Endothelial cell of umbilical vein (primary cell): ENCODE measurements at regions of chr2 and their contacts with region 1.

Region 1: GRCh38 chr2:64675860-64676259 is 22.1 kb upstream of the SERTAD2 start:
- DNase-seq: no peak
- H3K4me3 ChIP-seq: no peak overlapping the region
- H3K27ac ChIP-seq: no peak overlapping the region
- H3K4me1 ChIP-seq: no peaks in the 10 kb centered on the region
- H3K27me3 ChIP-seq: no peaks in the 10 kb centered on the region
- CTCF ChIP-seq: no peak
- POLR2A ChIP-seq: no peak

Region 2: GRCh38 chr2:64661741-64662169 is 14.1 kb before region 1 on chr2:
- CTCF ChIA-PET with region 1: interaction called, 10 read pairs
- POLR2A ChIA-PET with region 1: no interaction called
- dilution Hi-C with region 1: no loop called
- intact Hi-C with region 1: no loop called
- DNase-seq: peak; percentile 14
- H3K4me3 ChIP-seq: no peak overlapping the region
- H3K27ac ChIP-seq: no peak overlapping the region
- H3K4me1 ChIP-seq: no peaks in the 10 kb centered on the region
- H3K27me3 ChIP-seq: no peaks in the 10 kb centered on the region
- CTCF ChIP-seq: no peak
- POLR2A ChIP-seq: no peak